ENCODE measurements at regions of chr7 and their contacts with region 1.

Region 1: GRCh38 chr7:129144095-129144833 is at the start of gene TSPAN33:
- DNase-seq: peak; percentile 43 to 79 (median 53)
- ATAC-seq: peak; percentile 93
- H3K4me3 ChIP-seq: peak within 1 kb of the TSS; percentile 93
- H3K4me3 Mint-ChIP-seq: peak within 1 kb of the TSS; percentile 90 to 97 (median 94)
- H3K27ac ChIP-seq: peak within 1 kb of the TSS; percentile 58
- H3K27ac Mint-ChIP-seq: peak within 1 kb of the TSS in 8 of 9 donors; percentile 7 to 84 (median 73)
- H3K4me1 ChIP-seq: peaks cover 4 to 10% of the 10 kb centered on the region in 2 donors
- H3K4me1 Mint-ChIP-seq: peaks cover 12 to 36% (median 28%) of the 10 kb centered on the region in 7 donors
- H3K27me3 ChIP-seq: peaks cover 0 to 5% of the 10 kb centered on the region in 2 donors
- H3K27me3 Mint-ChIP-seq: peaks cover 0 to 66% (median 5%) of the 10 kb centered on the region in 5 donors
- total RNA-seq, gene TSPAN33: 1.8 to 14.8 (median 3.6) TPM

Region 2: DNA sequence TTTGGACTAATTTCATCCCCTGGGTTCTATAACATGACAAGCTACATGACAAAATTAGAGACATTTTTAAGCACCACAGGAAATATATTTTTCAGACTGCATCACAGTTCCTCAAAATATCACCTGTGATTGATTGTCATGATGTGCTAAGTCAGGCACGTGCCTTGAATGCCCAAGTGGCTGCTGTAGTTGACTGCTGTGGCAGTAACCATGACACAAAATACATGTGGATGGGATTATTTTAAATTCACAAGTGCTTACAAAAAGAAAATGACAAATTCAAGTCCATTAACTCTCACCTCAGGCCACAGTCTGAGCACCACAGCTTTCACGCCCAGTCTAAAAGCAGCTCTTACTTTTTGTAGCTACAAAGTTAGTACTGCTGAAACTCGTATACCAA is 134.8 kb before region 1 on chr7:
- CTCF ChIA-PET with region 1: no interaction called
- POLR2A ChIA-PET with region 1: no interaction called
- intact Hi-C with region 1: no loop called
- DNase-seq: no peak
- ATAC-seq: no peak
- H3K4me3 ChIP-seq: no peak overlapping the region
- H3K4me3 Mint-ChIP-seq: no peak overlapping the region
- H3K27ac ChIP-seq: no peak overlapping the region
- H3K27ac Mint-ChIP-seq: peak overlapping the region in 3 of 9 donors; percentile 15 to 37 (median 16)
- H3K4me1 ChIP-seq: no peaks in the 10 kb centered on the region
- H3K4me1 Mint-ChIP-seq: peaks cover 11 to 25% (median 20%) of the 10 kb centered on the region in 7 donors
- H3K27me3 ChIP-seq: no peaks in the 10 kb centered on the region
- H3K27me3 Mint-ChIP-seq: no peaks in the 10 kb centered on the region

Region 3: GRCh38 chr7:129169171-129169671 is 25.0 kb after region 1 on chr7:
- CTCF ChIA-PET with region 1: interaction called, 3 read pairs
- POLR2A ChIA-PET with region 1: interaction called, 4 read pairs
- intact Hi-C with region 1: loop called in 1 of 2 experiments (anchors 2 kb)
- DNase-seq: peak in 7 of 9 donors; percentile 11 to 51 (median 22)
- ATAC-seq: peak; percentile 79
- H3K4me3 ChIP-seq: peak overlapping the region; percentile 46
- H3K4me3 Mint-ChIP-seq: peak overlapping the region; percentile 75 to 88 (median 82)
- H3K27ac ChIP-seq: peak overlapping the region; percentile 62
- H3K27ac Mint-ChIP-seq: peak overlapping the region in 4 of 9 donors; percentile 24 to 73 (median 54)
- H3K4me1 ChIP-seq: peaks cover 0 to 10% of the 10 kb centered on the region in 2 donors
- H3K4me1 Mint-ChIP-seq: peaks cover 0 to 27% (median 14%) of the 10 kb centered on the region in 7 donors
- H3K27me3 ChIP-seq: no peaks in the 10 kb centered on the region
- H3K27me3 Mint-ChIP-seq: peaks cover 0 to 25% (median 0%) of the 10 kb centered on the region in 5 donors